Right cardiac atrium (tissue), 5 donors: ENCODE measurements at regions of chr1 and their contacts with region 1.

Region 1: DNA sequence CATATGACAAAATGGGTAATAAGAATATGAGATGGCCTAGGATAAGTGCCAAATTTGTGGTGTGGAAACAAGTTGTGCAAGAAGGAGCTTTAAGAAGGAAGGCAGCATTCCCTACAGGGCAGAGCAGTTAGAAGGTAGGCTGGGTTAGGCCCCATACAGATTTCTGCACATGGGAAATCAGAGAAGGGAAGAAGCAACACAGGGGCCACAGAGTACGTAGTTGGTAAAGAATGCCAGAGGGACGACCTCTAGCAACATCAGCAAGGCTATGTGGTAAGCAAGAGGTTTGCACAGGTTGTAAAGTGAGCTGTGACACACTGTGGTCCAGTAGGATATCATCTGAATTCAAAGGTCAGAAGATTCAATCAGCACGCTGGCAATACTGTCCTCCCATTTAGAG is 765.6 kb upstream of the B3GALT2 start:
- DNase-seq: no peak
- ATAC-seq: peak; percentile 23
- H3K4me3 ChIP-seq: no peak overlapping the region
- H3K27ac ChIP-seq: peak overlapping the region; percentile 91
- H3K4me1 ChIP-seq: no peaks in the 10 kb centered on the region
- H3K27me3 ChIP-seq: no peaks in the 10 kb centered on the region

Region 2: GRCh38 chr1:193448682-193449461 is 503.1 kb before region 1 on chr1:
- intact Hi-C with region 1: no loop called
- DNase-seq: no peak
- ATAC-seq: no peak
- H3K4me3 ChIP-seq: no peak overlapping the region
- H3K27ac ChIP-seq: no peak overlapping the region
- H3K4me1 ChIP-seq: no peaks in the 10 kb centered on the region
- H3K27me3 ChIP-seq: no peaks in the 10 kb centered on the region

Region 3: GRCh38 chr1:194069168-194069830 is 117.3 kb after region 1 on chr1:
- intact Hi-C with region 1: loop called in 1 of 4 experiments (anchors 5 kb)
- DNase-seq: peak; percentile 73 to 85 (median 80)
- ATAC-seq: peak; percentile 91 to 93
- H3K4me3 ChIP-seq: no peak overlapping the region
- H3K27ac ChIP-seq: peak overlapping the region; percentile 11
- H3K4me1 ChIP-seq: no peaks in the 10 kb centered on the region
- H3K27me3 ChIP-seq: no peaks in the 10 kb centered on the region